OCI-LY7 (cell line): ENCODE measurements at regions of chr3 and their contacts with region 1.

Region 1: DNA sequence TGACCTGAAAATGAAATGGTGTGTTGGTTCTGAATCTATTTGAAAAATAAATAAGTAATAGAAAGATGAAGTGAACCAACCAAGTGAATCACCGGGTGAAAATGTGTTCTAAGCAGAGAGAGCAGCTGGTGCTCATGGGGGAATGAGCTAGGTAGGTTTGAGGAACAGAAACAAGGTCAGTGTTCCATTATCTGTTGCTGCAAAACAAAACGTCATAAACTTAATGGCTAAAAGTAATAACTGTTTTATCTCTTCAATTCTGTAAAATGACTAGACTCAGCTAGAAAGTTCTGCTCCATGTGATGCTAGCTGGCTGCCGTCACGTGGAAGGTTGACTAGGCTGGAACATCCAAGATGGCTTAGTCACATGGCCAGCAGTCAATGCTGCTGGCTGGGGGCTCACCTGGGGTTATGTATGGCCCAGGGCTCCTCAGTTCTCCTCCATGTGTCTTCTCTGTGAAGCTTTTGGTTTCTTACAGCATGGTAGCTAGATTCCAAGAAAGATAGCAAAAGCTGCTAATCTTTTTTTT is 13.3 kb upstream of the SH3BP5 start:
- DNase-seq: peak; percentile 87
- H3K4me3 ChIP-seq: peak overlapping the region; percentile 5
- H3K27ac ChIP-seq: peak overlapping the region; percentile 91
- H3K4me1 ChIP-seq: peaks cover 60% of the 10 kb centered on the region
- CTCF ChIP-seq: no peak

Region 2: GRCh38 chr3:15356186-15356585 is 10.5 kb after region 1 on chr3:
- CTCF ChIA-PET with region 1: no interaction called
- POLR2A ChIA-PET with region 1: interaction called, 21 read pairs
- intact Hi-C with region 1: loop called (anchors 1 kb)
- DNase-seq: no peak
- H3K4me3 ChIP-seq: no peak overlapping the region
- H3K27ac ChIP-seq: no peak overlapping the region
- H3K4me1 ChIP-seq: peaks cover 46% of the 10 kb centered on the region
- CTCF ChIP-seq: no peak

Region 3: DNA sequence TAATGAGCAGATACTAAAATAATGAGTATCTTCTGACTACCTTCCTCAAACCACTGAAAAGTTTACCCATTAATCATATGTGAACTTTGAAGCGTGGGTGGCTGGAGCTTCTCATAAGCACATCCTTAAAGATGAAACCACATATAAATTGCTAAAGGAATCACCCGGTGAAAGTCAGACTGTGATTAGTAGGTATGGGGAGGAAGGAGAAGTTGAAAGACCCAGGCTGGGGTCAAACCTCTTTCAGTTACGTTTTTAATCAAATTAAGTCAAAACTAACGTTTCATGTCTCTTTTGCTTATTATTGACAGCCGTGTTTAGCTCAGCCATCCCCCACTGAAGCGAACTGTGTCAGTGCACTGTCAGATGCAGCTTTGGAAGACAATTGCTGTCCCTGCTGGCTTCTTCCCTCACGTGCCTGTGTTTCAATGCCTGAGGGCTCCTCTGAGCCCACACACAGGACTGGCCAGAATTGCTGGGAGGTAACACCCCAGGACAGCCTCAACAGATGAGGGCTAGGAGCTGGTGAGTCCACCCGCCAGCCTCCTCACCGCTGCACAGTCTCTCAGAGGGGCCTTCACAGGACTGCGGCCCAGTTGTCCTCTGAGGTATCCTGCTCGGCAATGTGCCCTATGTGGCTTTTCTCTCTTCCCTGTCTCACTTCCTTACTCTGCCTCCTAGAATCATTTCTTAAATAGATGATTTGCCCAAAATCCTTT is 16.0 kb after region 1 on chr3:
- CTCF ChIA-PET with region 1: no interaction called
- POLR2A ChIA-PET with region 1: interaction called, 21 read pairs
- intact Hi-C with region 1: loop called (anchors 1 kb)
- DNase-seq: peak; percentile 67
- H3K4me3 ChIP-seq: peak overlapping the region; percentile 53
- H3K27ac ChIP-seq: peak overlapping the region; percentile 84
- H3K4me1 ChIP-seq: peaks cover 47% of the 10 kb centered on the region
- CTCF ChIP-seq: no peak